Esophagus muscularis mucosa (tissue), 4 donors: ENCODE measurements at regions of chr3 and their contacts with region 1.

Region 1: GRCh38 chr3:141105828-141106628 is 54.9 kb downstream of the SPSB4 start:
- DNase-seq: peak; percentile 96
- H3K4me3 ChIP-seq: no peak overlapping the region
- H3K27ac ChIP-seq: no peak overlapping the region
- H3K4me1 ChIP-seq: peaks cover 0 to 14% (median 7%) of the 10 kb centered on the region in 4 donors
- H3K27me3 ChIP-seq: no peaks in the 10 kb centered on the region
- CTCF ChIP-seq: peak; percentile 77 to 80 (median 78)
- EP300 ChIP-seq: no peak
- POLR2A ChIP-seq: no peak

Region 2: GRCh38 chr3:140898340-140899180 is 207.5 kb before region 1 on chr3:
- intact Hi-C with region 1: loop called (anchors 5 kb)
- DNase-seq: no peak
- H3K4me3 ChIP-seq: no peak overlapping the region
- H3K27ac ChIP-seq: no peak overlapping the region
- H3K4me1 ChIP-seq: no peaks in the 10 kb centered on the region
- H3K27me3 ChIP-seq: peaks cover 0 to 10% (median 0%) of the 10 kb centered on the region in 4 donors
- CTCF ChIP-seq: peak; percentile 49 to 64 (median 63)
- EP300 ChIP-seq: no peak
- POLR2A ChIP-seq: no peak

Region 3: DNA sequence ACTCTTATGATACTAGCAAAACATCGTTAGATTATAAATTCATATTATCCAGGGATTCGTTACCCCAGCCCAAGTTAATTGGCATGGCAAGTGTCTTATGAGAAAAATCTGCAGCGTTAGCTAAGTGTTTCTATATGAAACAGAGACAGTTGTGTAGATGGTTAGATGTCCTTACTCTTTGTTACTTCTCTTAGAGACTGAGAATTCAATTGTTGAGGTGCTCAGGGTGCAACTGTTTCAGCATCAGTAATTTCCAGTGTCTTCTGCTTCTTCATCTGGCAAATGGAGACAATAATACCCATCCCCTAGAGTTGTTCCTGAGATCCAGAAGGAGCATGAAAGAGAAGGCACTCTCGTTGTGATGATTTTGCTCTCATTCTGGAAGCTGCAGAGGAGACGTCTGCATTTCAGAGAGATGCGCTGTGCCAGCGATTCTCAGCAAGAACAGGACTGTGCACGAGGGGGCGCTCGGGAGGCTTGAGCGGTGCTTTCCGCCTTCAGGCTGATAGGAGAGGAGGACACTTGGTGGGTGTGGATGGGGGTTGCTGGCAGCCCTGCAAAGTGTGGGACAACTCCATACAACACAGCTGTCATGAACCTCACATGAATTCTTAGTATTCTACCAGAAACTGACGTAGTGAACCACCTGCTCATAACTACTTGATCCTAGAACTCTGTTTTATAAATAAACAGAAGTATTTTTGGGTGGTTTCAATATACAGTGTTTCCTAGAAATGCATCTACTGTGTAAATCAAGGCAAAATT is 94.6 kb before region 1 on chr3:
- intact Hi-C with region 1: loop called (anchors 2 kb)
- DNase-seq: no peak
- H3K4me3 ChIP-seq: no peak overlapping the region
- H3K27ac ChIP-seq: no peak overlapping the region
- H3K4me1 ChIP-seq: peaks cover 0 to 13% (median 10%) of the 10 kb centered on the region in 4 donors
- H3K27me3 ChIP-seq: no peaks in the 10 kb centered on the region
- CTCF ChIP-seq: peak; percentile 75 to 84 (median 83)
- EP300 ChIP-seq: no peak
- POLR2A ChIP-seq: no peak

Region 4: GRCh38 chr3:141063831-141064230 is 42.2 kb before region 1 on chr3:
- intact Hi-C with region 1: no loop called
- DNase-seq: no peak
- H3K4me3 ChIP-seq: no peak overlapping the region
- H3K27ac ChIP-seq: no peak overlapping the region
- H3K4me1 ChIP-seq: peaks cover 0 to 4% (median 0%) of the 10 kb centered on the region in 4 donors
- H3K27me3 ChIP-seq: no peaks in the 10 kb centered on the region
- CTCF ChIP-seq: no peak
- EP300 ChIP-seq: no peak
- POLR2A ChIP-seq: no peak

Region 5: DNA sequence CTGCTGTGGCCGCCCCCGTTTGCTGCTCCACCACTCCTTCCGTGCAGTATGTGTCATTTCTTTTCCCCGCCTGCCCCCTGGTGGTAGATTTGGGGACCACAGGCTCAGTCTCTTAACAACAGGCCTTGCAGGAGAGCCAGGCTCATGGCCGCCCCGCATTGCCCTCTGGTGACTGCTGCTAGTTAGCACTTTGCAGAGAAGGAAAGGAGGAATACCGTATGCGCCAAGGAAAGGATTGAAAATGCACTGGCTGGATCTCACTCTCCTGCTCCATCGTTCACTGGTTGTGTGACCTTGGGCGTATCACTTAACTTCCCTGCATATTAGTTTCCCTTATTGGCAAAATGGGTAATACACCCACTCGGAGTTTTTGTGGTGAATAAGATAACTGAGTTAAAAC is 86.3 kb after region 1 on chr3:
- intact Hi-C with region 1: loop called (anchors 5 kb)
- DNase-seq: peak; percentile 100
- H3K4me3 ChIP-seq: no peak overlapping the region
- H3K27ac ChIP-seq: no peak overlapping the region
- H3K4me1 ChIP-seq: no peaks in the 10 kb centered on the region
- H3K27me3 ChIP-seq: peaks cover 0 to 4% (median 0%) of the 10 kb centered on the region in 4 donors
- CTCF ChIP-seq: peak; percentile 99
- EP300 ChIP-seq: no peak
- POLR2A ChIP-seq: no peak